ENCODE measurements at regions of chr14 and their contacts with region 1.

Region 1: GRCh38 chr14:37436494-37436893 is 158.6 kb downstream of the FOXA1 start:
- DNase-seq: peak; percentile 97
- ATAC-seq: peak; percentile 92
- H3K4me3 ChIP-seq: no peak overlapping the region; the same call in 1 of the 2 replicates
- H3K27ac ChIP-seq: peak overlapping the region; percentile 94
- H3K4me1 ChIP-seq: peaks cover 24% of the 10 kb centered on the region
- H3K27me3 ChIP-seq: no peaks in the 10 kb centered on the region
- CTCF ChIP-seq: no peak

Region 2: GRCh38 chr14:37320106-37320505 is 116.4 kb before region 1 on chr14:
- CTCF ChIA-PET with region 1: no interaction called
- POLR2A ChIA-PET with region 1: no interaction called
- intact Hi-C with region 1: loop called (anchors 2 kb)
- DNase-seq: peak; percentile 70
- ATAC-seq: peak; percentile 92
- H3K4me3 ChIP-seq: no peak overlapping the region
- H3K27ac ChIP-seq: no peak overlapping the region
- H3K4me1 ChIP-seq: peaks cover 18% of the 10 kb centered on the region
- H3K27me3 ChIP-seq: no peaks in the 10 kb centered on the region
- CTCF ChIP-seq: no peak

Region 3: DNA sequence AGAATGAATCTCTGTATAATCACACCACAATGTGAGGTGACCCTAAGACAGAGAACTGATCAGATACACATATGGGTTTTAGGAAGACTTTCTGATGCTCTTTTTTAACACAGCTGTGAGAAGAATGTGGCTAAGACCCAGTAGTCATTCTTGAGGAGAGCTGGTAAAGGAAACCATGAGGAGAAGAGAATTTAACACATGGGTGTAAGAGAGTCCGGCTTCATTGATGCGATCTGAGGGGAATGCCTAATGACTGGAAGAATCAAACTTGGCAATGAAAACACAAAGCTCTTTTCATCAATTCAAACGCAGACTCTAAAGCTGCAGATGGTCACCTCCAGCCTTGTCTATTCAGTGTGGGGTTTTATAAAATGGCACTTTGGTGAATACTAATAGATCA is 79.3 kb after region 1 on chr14:
- CTCF ChIA-PET with region 1: no interaction called
- POLR2A ChIA-PET with region 1: no interaction called
- intact Hi-C with region 1: loop called (anchors 5 kb)
- DNase-seq: no peak
- ATAC-seq: no peak
- H3K4me3 ChIP-seq: no peak overlapping the region
- H3K27ac ChIP-seq: no peak overlapping the region
- H3K4me1 ChIP-seq: peaks cover 10% of the 10 kb centered on the region
- H3K27me3 ChIP-seq: no peaks in the 10 kb centered on the region
- CTCF ChIP-seq: no peak

Region 4: DNA sequence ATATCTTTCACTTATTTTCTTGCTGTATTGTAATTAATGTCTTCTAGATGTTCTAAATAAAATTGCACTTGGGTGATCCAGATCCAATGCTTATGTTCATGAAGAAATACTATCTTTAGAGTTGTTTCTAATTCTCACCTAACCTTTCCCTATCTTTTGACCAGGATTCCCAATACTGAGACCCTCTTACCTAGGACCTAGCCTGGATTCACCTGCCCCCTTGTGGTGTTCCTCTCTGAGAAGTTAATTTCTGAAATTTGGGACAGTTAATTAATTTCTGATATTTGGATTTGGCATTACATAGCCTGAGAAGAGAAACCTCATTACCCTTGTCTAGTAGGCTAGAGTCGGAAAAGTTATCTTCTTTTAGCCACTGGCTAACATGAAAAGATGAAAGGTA is 129.1 kb after region 1 on chr14:
- CTCF ChIA-PET with region 1: no interaction called
- POLR2A ChIA-PET with region 1: no interaction called
- intact Hi-C with region 1: loop called (anchors 1 kb)
- DNase-seq: peak; percentile 59
- ATAC-seq: peak; percentile 6; the same call in 1 of the 2 replicates
- H3K4me3 ChIP-seq: peak overlapping the region; percentile 60
- H3K27ac ChIP-seq: peak overlapping the region; percentile 91
- H3K4me1 ChIP-seq: peaks cover 59% of the 10 kb centered on the region
- H3K27me3 ChIP-seq: no peaks in the 10 kb centered on the region
- CTCF ChIP-seq: peak; percentile 95

Measured in PC-3 (cell line).